Activated CD8-positive, alpha-beta T cell treated with anti-CD3 and anti-CD28 coated beads, Interleukin-2, amount 10 ng/mL, durations not matched to agents 7 days and 5 days (primary cell): ENCODE measurements at regions of chr19 and their contacts with region 1.

Region 1: GRCh38 chr19:18109733-18110595 is 12.4 kb downstream of the MAST3 start:
- DNase-seq: peak; percentile 60
- ATAC-seq: peak; percentile 83
- H3K4me3 Mint-ChIP-seq: peak overlapping the region; percentile 75
- H3K27ac Mint-ChIP-seq: peak overlapping the region; percentile 46
- H3K4me1 Mint-ChIP-seq: peaks cover 33% of the 10 kb centered on the region
- H3K27me3 Mint-ChIP-seq: no peaks in the 10 kb centered on the region

Region 2: GRCh38 chr19:18041054-18041453 is 68.9 kb before region 1 on chr19:
- CTCF ChIA-PET with region 1: no interaction called
- POLR2A ChIA-PET with region 1: no interaction called
- DNase-seq: no peak
- ATAC-seq: no peak
- H3K4me3 Mint-ChIP-seq: no peak overlapping the region
- H3K27ac Mint-ChIP-seq: no peak overlapping the region
- H3K4me1 Mint-ChIP-seq: peaks cover 28% of the 10 kb centered on the region
- H3K27me3 Mint-ChIP-seq: peaks cover 10% of the 10 kb centered on the region

Region 3: DNA sequence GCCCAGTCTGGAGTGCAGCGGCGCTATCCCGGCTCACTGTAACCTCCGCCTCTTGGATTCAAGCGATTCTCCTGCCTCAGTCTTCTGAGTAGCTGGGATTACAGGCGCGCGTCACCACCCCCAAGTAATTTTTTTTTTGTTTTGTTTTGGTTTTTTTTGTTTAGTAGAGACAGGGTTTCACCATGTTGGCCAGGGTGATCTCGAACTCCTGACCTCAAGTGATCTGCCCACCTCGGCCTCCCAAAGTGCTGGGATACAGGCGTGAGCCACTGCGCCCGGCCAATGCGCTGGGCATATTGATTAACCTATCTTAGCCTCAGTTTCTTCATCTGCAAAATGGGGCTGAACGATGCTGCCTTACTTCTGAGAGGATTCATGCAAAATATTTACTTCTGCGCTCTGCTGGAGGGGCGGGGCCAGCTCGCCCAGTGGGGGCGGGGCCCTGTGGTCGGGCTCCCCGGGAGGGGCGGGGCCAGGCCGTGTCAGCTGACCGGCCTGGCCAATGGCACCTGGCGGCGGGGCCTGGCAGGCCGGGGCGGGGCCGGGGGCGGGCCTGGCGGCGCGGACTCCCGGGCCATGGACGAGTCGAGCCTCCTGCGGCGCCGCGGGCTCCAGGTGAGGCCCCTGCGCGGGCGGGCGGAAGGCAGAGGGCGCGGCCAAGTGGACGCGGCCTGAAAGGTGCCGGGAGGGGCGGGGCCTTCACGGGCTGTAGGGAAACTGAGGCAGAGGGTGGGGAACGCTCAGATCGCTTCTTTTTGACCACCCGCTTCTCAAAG is 12.6 kb before region 1 on chr19 and contains the start of gene MAST3:
- CTCF ChIA-PET with region 1: interaction called, 29 read pairs
- POLR2A ChIA-PET with region 1: interaction called, 8 read pairs
- DNase-seq: peak; percentile 94
- ATAC-seq: peak; percentile 98
- H3K4me3 Mint-ChIP-seq: peak within 1 kb of the TSS; percentile 82
- H3K27ac Mint-ChIP-seq: peak within 1 kb of the TSS; percentile 46
- H3K4me1 Mint-ChIP-seq: peaks cover 44% of the 10 kb centered on the region
- H3K27me3 Mint-ChIP-seq: no peaks in the 10 kb centered on the region
- total RNA-seq, gene MAST3: 22.9 to 25.1 TPM